MCF 10A (cell line): ENCODE measurements at regions of chr13 and their contacts with region 1.

Region 1: DNA sequence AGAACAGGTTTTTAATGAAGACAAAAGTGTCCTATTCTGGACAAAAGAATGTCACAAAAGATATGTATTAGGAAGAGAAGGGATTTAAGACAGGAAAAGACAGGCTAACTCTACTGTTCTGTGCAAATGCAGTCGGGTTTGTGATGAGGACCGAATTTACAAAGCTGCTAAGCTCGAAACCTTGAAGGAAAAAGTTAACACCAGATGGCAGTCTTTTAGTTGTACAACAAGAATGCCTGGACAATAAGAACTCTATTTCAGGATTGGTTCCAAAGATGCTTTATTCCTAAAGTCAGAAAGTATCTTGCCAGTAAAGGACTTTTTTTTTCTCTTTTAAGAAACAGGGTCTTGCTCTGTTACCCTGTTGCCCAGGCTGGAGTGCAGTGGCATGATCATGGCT is 51.1 kb downstream of the HS6ST3 start:
- DNase-seq: peak; percentile 52
- H3K4me3 Mint-ChIP-seq: no peak overlapping the region
- H3K27ac Mint-ChIP-seq: no peak overlapping the region
- H3K4me1 Mint-ChIP-seq: no peaks in the 10 kb centered on the region
- H3K27me3 Mint-ChIP-seq: no peaks in the 10 kb centered on the region
- CTCF ChIP-seq: peak; percentile 43

Region 2: GRCh38 chr13:96159725-96160124 is 18.7 kb after region 1 on chr13:
- CTCF ChIA-PET with region 1: interaction called, 14 read pairs
- POLR2A ChIA-PET with region 1: no interaction called
- intact Hi-C with region 1: no loop called
- DNase-seq: no peak
- H3K4me3 Mint-ChIP-seq: no peak overlapping the region
- H3K27ac Mint-ChIP-seq: no peak overlapping the region
- H3K4me1 Mint-ChIP-seq: peaks cover 5% of the 10 kb centered on the region
- H3K27me3 Mint-ChIP-seq: no peaks in the 10 kb centered on the region
- CTCF ChIP-seq: no peak

Region 3: DNA sequence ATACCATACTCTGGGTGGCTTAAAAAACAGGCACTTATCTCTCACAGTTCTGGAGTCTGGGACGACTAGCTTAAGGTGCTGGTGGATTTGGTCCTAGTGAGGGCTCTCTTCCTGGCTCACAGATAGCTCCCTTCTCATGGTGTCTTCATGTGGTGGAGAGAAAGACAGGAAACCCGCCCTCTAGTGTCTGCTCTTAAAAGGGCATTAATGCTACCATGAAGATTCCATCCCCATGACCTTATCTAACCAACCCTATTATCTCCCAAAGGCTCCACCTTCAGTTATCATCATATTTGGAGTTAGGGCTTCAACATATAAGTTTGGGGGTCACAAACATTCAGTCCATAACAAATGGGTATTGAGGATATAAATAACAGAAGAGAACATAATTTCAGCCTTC is 88.3 kb after region 1 on chr13:
- CTCF ChIA-PET with region 1: interaction called, 10 read pairs
- POLR2A ChIA-PET with region 1: no interaction called
- intact Hi-C with region 1: no loop called
- DNase-seq: peak; percentile 60
- H3K4me3 Mint-ChIP-seq: no peak overlapping the region
- H3K27ac Mint-ChIP-seq: no peak overlapping the region
- H3K4me1 Mint-ChIP-seq: no peaks in the 10 kb centered on the region
- H3K27me3 Mint-ChIP-seq: no peaks in the 10 kb centered on the region
- CTCF ChIP-seq: peak; percentile 47

Region 4: GRCh38 chr13:96817336-96817941 is 676.4 kb after region 1 on chr13:
- CTCF ChIA-PET with region 1: interaction called, 37 read pairs
- POLR2A ChIA-PET with region 1: interaction called, 5 read pairs
- intact Hi-C with region 1: no loop called
- DNase-seq: peak; percentile 55
- H3K4me3 Mint-ChIP-seq: no peak overlapping the region
- H3K27ac Mint-ChIP-seq: no peak overlapping the region
- H3K4me1 Mint-ChIP-seq: peaks cover 6% of the 10 kb centered on the region
- H3K27me3 Mint-ChIP-seq: no peaks in the 10 kb centered on the region
- CTCF ChIP-seq: peak; percentile 67